GM10248 (cell line): ENCODE measurements at regions of chr6 and their contacts with region 1.

Region 1: GRCh38 chr6:123777563-123777962 is 26.1 kb upstream of the NKAIN2 start:
- DNase-seq: no peak
- CTCF ChIP-seq: peak; percentile 36

Region 2: DNA sequence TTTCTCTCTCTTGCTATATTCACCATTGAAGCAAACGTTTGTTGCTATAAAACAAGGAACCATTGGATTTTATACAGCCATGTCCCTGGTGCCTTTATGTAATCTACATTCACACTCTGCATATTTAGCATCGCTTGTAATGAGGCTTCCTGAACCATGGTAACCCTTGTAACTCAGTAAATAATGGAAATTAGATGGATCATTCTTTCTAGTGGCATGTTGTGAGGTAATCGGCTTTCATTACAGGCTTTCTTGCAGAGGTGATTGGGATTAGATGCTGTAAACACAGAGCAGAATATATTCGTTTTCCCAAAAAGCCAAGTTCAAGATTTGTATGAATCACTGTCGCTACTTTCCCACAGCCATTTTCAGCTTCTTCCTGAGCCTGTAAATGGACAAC is 952.4 kb before region 1 on chr6:
- CTCF ChIA-PET with region 1: no interaction called
- POLR2A ChIA-PET with region 1: no interaction called
- DNase-seq: no peak
- CTCF ChIP-seq: no peak

Region 3: DNA sequence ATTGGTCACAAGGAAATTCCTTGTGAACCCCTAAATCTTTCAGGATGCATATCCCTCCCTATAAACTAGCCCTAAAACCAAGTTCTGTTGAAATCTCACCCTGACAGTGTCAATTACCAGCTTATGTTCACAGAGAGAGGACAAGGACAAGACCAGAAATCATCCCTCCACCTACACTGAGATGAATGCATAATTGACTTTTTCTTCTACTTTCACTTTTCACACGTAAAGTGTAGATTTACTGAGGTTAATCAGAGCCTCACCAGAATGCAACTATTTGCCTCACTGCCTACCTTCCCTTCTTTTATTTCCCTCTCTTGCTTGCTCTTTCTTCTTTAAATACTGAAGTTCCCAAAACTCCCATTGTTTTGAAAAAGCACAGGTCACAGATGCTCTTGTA is 10.8 kb after region 1 on chr6:
- CTCF ChIA-PET with region 1: interaction called, 12 read pairs
- POLR2A ChIA-PET with region 1: no interaction called
- DNase-seq: no peak
- CTCF ChIP-seq: no peak